ENCODE measurements at regions of chr10 and their contacts with region 1.

Region 1: GRCh38 chr10:68600041-68600778 is 40.1 kb downstream of the TET1 start:
- DNase-seq: peak; percentile 89
- ATAC-seq: peak; percentile 94
- H3K4me3 ChIP-seq: peak overlapping the region; percentile 67
- H3K27ac ChIP-seq: peak overlapping the region; percentile 65
- H3K4me1 ChIP-seq: peaks cover 42% of the 10 kb centered on the region
- H3K27me3 ChIP-seq: no peaks in the 10 kb centered on the region
- CTCF ChIP-seq: no peak

Region 2: GRCh38 chr10:68001539-68001938 is 598.7 kb before region 1 on chr10:
- CTCF ChIA-PET with region 1: no interaction called
- POLR2A ChIA-PET with region 1: no interaction called
- intact Hi-C with region 1: no loop called
- DNase-seq: no peak
- ATAC-seq: no peak
- H3K4me3 ChIP-seq: no peak overlapping the region
- H3K27ac ChIP-seq: no peak overlapping the region
- H3K4me1 ChIP-seq: no peaks in the 10 kb centered on the region
- H3K27me3 ChIP-seq: no peaks in the 10 kb centered on the region
- CTCF ChIP-seq: no peak

Region 3: DNA sequence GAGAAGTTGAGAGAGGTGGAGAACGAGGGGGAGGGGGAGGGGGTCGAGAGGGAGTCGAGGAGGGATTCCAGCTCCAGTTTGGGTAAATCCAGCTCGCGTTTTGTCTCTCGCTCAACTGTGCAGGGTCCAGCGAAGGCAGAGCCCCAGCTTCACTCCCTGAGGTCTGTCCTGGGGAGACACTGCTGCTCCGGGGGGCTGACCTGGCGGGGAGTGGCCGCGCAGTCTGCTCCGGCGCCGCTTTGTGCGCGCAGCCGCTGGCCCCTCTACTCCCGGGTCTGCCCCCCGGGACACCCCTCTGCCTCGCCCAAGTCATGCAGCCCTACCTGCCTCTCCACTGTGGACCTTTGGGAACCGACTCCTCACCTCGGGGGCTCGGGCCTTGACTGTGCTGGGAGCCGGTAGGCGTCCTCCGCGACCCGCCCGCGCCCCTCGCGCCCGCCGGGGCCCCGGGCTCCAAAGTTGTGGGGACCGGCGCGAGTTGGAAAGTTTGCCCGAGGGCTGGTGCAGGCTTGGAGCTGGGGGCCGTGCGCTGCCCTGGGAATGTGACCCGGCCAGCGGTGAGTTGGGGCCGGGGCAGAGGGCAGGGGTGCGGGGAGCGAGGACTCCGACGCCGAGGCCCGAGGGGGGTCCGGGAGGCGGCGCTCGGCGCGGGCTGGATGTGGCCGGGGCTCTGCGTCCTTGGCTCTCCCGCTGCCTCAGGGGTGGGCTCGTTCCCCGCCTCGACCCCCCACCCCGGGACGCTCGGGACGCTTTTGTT is 39.8 kb before region 1 on chr10 and contains the start of gene TET1:
- CTCF ChIA-PET with region 1: interaction called, 3 read pairs
- POLR2A ChIA-PET with region 1: interaction called, 4 read pairs
- intact Hi-C with region 1: loop called (anchors 1 kb)
- DNase-seq: peak; percentile 68
- ATAC-seq: peak; percentile 79
- H3K4me3 ChIP-seq: peak within 1 kb of the TSS; percentile 96
- H3K27ac ChIP-seq: no peak within 1 kb of the TSS
- H3K4me1 ChIP-seq: no peaks in the 10 kb centered on the region
- H3K27me3 ChIP-seq: no peaks in the 10 kb centered on the region
- CTCF ChIP-seq: no peak
- total RNA-seq, gene TET1: 2.3 and 3.0 TPM in 2 replicates

Region 4: GRCh38 chr10:68666280-68666760 is 66.1 kb after region 1 on chr10:
- CTCF ChIA-PET with region 1: no interaction called
- POLR2A ChIA-PET with region 1: no interaction called
- intact Hi-C with region 1: loop called (anchors 2 kb)
- DNase-seq: peak; percentile 92
- ATAC-seq: peak; percentile 96
- H3K4me3 ChIP-seq: peak overlapping the region; percentile 29; the same call in 1 of the 2 replicates
- H3K27ac ChIP-seq: peak overlapping the region; percentile 80
- H3K4me1 ChIP-seq: peaks cover 21% of the 10 kb centered on the region
- H3K27me3 ChIP-seq: no peaks in the 10 kb centered on the region
- CTCF ChIP-seq: no peak

Measured in PC-3 (cell line).